ENCODE measurements at regions of chr17 and their contacts with region 1.

Region 1: GRCh38 chr17:74354123-74354522 is 7.5 kb downstream of the BTBD17 start:
- DNase-seq: peak; percentile 58
- H3K4me3 ChIP-seq: no peak overlapping the region
- H3K27ac ChIP-seq: no peak overlapping the region
- H3K4me1 ChIP-seq: no peaks in the 10 kb centered on the region
- CTCF ChIP-seq: peak; percentile 97

Region 2: DNA sequence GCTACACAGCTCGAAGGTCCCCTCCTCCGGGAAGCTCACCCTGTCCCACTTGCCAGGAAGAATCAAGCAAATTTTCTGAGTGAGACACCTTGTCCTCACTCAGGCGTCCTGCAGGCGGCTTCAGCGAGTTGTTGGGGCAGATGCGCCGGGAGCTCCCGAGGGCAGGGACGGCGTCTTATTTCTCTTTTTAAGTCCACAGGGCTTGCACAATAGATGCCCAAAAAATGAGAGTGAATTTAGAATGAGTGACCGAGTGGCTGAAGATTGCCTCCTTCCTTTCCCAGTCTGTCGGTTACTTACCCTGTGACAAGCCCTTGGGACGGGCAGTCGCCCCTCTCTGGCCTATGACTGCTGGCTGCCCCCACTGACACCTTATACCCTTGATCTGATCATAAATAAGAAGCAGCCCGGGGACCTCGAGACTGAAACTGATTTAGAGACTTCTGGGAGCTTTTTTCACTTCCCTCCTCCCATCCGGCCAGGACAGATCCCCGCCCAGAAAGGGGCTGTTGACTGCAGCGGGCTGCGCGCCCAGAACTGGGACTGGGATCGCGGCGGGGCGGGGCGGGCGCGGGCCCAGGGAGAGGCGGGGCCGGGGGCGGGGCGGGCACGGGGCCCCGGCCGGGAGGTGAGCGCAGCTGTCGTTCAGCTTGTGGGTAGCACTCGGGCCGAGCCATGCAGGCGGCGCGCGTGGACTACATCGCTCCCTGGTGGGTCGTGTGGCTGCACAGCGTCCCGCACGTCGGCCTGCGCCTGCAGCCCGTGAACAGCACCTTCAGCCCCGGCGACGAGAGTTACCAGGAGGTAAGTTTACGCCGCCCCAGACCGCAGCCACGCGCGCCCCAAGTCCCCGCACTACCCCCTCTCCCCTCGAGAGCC is 141.0 kb before region 1 on chr17 and contains the start of gene TTYH2:
- CTCF ChIA-PET with region 1: no interaction called
- POLR2A ChIA-PET with region 1: no interaction called
- intact Hi-C with region 1: loop called (anchors 5 kb)
- DNase-seq: peak; percentile 83
- H3K4me3 ChIP-seq: peak within 1 kb of the TSS; percentile 68
- H3K27ac ChIP-seq: peak within 1 kb of the TSS; percentile 53
- H3K4me1 ChIP-seq: peaks cover 56% of the 10 kb centered on the region
- CTCF ChIP-seq: peak; percentile 47; the same call in 1 of the 2 replicates
- total RNA-seq, gene TTYH2: 1.7 and 3.1 TPM in 2 replicates

Region 3: DNA sequence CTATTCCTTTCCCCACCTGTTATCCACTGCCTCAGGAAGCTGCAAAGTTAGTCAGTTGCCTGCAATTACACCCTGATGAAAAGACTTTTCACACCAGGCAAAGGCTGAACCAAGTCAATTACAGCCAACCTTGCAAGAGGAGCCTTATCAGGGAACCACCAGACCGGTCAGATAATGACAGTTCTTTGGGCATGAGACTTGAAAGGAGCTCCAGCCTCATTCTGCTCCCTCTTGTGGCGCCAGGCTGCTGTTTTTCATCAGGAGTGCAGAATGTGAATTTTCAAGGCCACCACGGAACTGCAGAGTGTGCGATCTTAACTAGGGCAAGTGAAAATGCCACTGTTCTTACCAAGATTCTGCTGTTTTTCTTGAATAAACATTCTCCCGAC is 57.6 kb before region 1 on chr17:
- CTCF ChIA-PET with region 1: no interaction called
- POLR2A ChIA-PET with region 1: no interaction called
- intact Hi-C with region 1: loop called (anchors 1 kb)
- DNase-seq: peak; percentile 39
- H3K4me3 ChIP-seq: no peak overlapping the region
- H3K27ac ChIP-seq: no peak overlapping the region
- H3K4me1 ChIP-seq: no peaks in the 10 kb centered on the region
- CTCF ChIP-seq: peak; percentile 70

Region 4: GRCh38 chr17:74379495-74380085 is 25.5 kb after region 1 on chr17:
- CTCF ChIA-PET with region 1: no interaction called
- POLR2A ChIA-PET with region 1: no interaction called
- intact Hi-C with region 1: no loop called
- DNase-seq: peak; percentile 88
- H3K4me3 ChIP-seq: no peak overlapping the region
- H3K27ac ChIP-seq: no peak overlapping the region
- H3K4me1 ChIP-seq: peaks cover 7% of the 10 kb centered on the region
- CTCF ChIP-seq: peak; percentile 99

Measured in OCI-LY7 (cell line).